ENCODE measurements at regions of chr12 and their contacts with region 1.

Region 1: DNA sequence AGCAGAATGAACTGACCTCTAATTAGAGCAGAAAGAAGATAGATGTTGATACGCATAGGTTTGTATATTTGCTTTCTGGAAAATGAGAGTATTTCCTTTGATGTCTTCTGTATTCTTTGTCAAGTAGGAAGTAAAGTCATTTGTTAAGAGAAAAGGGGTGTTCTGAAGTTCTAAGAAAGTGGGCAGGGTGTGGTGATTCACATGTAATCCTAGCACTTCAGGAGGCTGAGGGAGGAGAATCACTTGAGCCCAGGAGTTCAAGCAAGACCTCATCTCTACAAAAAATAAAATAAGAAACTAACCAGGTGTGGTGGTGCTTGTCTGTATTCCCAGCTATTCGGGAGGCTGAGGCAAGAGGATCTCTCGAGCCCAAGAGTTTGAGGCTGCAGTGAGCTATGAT is 2.8 kb downstream of the RHNO1 start:
- DNase-seq: no peak
- H3K4me3 ChIP-seq: no peak overlapping the region
- H3K27ac ChIP-seq: no peak overlapping the region
- H3K4me1 ChIP-seq: peaks cover 5 to 14% of the 10 kb centered on the region in 2 donors
- H3K27me3 ChIP-seq: no peaks in the 10 kb centered on the region
- CTCF ChIP-seq: no peak
- POLR2A ChIP-seq: no peak

Region 2: DNA sequence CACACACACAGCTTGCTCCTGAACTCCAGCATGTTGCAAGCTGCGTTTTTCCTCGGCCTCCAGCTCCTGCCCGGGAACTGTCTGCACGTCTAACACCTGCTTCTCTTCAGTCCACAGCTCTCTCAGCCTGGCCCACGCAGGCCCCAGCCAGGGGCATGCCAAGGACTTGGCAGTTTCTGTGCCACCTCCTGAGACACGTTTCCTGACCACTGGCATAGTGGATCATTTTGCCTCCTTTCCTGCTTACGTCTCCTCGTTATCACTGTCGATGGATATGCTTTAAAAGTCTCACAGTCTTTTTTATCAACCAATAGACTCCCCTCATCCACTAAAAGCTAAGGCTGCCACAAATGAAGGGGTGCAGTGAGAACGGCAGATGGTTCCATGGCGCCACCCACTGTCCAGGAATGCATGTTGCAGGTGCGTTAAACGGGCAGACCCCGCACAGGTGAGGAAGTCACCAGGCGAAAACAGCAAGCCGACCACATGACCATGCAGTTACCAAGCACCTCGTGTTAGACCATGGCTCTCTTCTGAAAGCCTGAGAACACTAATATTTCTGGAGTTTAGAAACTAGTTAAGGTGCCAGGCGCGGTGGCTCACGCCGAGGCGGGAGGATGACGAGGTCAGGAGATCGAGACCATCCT is 64.7 kb after region 1 on chr12:
- intact Hi-C with region 1: loop called (anchors 10 kb)
- DNase-seq: peak in 6 of 7 donors; percentile 35 to 81 (median 58)
- H3K4me3 ChIP-seq: no peak overlapping the region
- H3K27ac ChIP-seq: no peak overlapping the region
- H3K4me1 ChIP-seq: peaks cover 0 to 8% of the 10 kb centered on the region in 2 donors
- H3K27me3 ChIP-seq: no peaks in the 10 kb centered on the region
- CTCF ChIP-seq: peak; percentile 54 to 82 (median 75)
- POLR2A ChIP-seq: no peak

Region 3: GRCh38 chr12:3034067-3034750 is 154.4 kb after region 1 on chr12:
- intact Hi-C with region 1: loop called in 1 of 2 experiments (anchors 10 kb)
- DNase-seq: peak; percentile 42 to 79 (median 58)
- H3K4me3 ChIP-seq: no peak overlapping the region
- H3K27ac ChIP-seq: no peak overlapping the region
- H3K4me1 ChIP-seq: no peaks in the 10 kb centered on the region
- H3K27me3 ChIP-seq: no peaks in the 10 kb centered on the region
- CTCF ChIP-seq: peak; percentile 44 to 62 (median 56)
- POLR2A ChIP-seq: no peak